ENCODE measurements at regions of chr22 and their contacts with region 1.

Region 1: DNA sequence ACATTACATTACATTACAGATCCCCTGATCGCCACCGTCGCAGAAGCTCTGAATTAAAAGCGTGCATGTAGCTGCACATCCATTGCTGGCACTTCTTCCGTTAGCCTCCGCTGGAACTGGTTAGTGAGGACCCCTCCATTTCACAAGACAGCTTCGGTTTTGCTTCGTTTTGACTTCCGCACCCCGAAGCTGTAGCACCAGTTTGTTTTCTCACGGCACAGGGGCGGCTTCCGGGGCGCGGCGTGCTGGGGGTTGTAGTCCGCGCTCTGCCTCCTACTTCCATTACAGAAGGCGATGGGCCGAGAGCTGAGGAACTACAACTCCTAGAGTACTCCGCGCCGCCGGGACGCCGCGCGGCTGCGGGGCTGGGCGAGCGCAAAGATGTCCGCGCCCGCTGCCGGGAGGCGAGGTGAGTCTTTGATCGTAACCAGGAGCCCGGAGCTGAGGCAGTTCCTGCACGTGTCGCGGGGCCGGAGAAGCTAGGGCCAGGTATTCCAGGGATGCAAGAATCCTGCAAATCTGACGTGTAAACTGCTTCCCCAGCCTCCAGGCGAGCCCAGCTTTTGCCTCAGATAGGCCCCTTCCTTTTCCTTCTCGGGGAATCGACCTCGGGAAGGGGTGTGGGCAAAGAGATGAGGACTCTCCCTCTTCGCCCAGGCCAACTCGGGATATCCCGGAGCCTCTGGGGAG is at the start of gene PEX26:
- DNase-seq: peak; percentile 93
- H3K4me3 ChIP-seq: peak within 1 kb of the TSS; percentile 98
- H3K4me3 Mint-ChIP-seq: peak within 1 kb of the TSS; percentile 99
- H3K27ac Mint-ChIP-seq: peak within 1 kb of the TSS; percentile 95
- H3K4me1 ChIP-seq: peaks cover 16% of the 10 kb centered on the region
- H3K4me1 Mint-ChIP-seq: peaks cover 24% of the 10 kb centered on the region
- H3K27me3 ChIP-seq: no peaks in the 10 kb centered on the region
- H3K27me3 Mint-ChIP-seq: no peaks in the 10 kb centered on the region
- CTCF ChIP-seq: no peak
- total RNA-seq, gene PEX26: 37.9 and 40.6 TPM in 2 replicates

Region 2: DNA sequence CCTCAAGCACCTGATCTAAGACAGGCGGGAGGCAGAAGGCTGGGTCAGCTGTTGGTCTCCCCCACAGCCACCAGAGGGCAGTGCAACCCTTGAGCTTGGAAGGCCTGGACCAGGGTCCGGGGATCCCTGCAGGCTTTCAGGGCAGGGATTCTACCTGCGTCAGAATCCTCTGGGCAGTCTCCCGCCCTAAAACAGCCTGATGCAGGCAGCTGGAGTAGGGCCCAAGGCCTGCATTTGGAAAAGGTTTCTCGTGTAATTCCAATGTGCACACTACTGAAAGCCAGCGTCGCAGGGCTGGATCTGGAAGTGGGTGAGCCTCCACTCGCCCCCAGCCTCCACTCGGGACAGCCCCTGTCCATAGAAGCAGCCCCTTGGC is 335.3 kb before region 1 on chr22:
- CTCF ChIA-PET with region 1: interaction called, 11 read pairs
- POLR2A ChIA-PET with region 1: no interaction called
- intact Hi-C with region 1: loop called (anchors 2 kb)
- DNase-seq: peak; percentile 80 to 85
- H3K4me3 ChIP-seq: no peak overlapping the region
- H3K4me3 Mint-ChIP-seq: no peak overlapping the region
- H3K27ac Mint-ChIP-seq: no peak overlapping the region
- H3K4me1 ChIP-seq: no peaks in the 10 kb centered on the region
- H3K4me1 Mint-ChIP-seq: no peaks in the 10 kb centered on the region
- H3K27me3 ChIP-seq: no peaks in the 10 kb centered on the region
- H3K27me3 Mint-ChIP-seq: no peaks in the 10 kb centered on the region
- CTCF ChIP-seq: peak; percentile 82 to 94

Region 3: GRCh38 chr22:17897858-17898257 is 179.9 kb before region 1 on chr22:
- CTCF ChIA-PET with region 1: interaction called, 9 read pairs
- POLR2A ChIA-PET with region 1: interaction called, 6 read pairs
- intact Hi-C with region 1: loop called (anchors 5 kb)
- DNase-seq: peak in 1 of 2 experiments; percentile 19
- H3K4me3 ChIP-seq: no peak overlapping the region
- H3K4me3 Mint-ChIP-seq: no peak overlapping the region
- H3K27ac Mint-ChIP-seq: peak overlapping the region; percentile 73
- H3K4me1 ChIP-seq: peaks cover 36% of the 10 kb centered on the region
- H3K4me1 Mint-ChIP-seq: peaks cover 28% of the 10 kb centered on the region
- H3K27me3 ChIP-seq: no peaks in the 10 kb centered on the region
- H3K27me3 Mint-ChIP-seq: no peaks in the 10 kb centered on the region
- CTCF ChIP-seq: no peak

Region 4: GRCh38 chr22:18001040-18001893 is 76.5 kb before region 1 on chr22:
- CTCF ChIA-PET with region 1: interaction called, 10 read pairs
- POLR2A ChIA-PET with region 1: interaction called, 5 read pairs
- intact Hi-C with region 1: loop called (anchors 2 kb)
- DNase-seq: peak; percentile 91 to 95
- H3K4me3 ChIP-seq: peak overlapping the region; percentile 69
- H3K4me3 Mint-ChIP-seq: peak overlapping the region; percentile 82
- H3K27ac Mint-ChIP-seq: peak overlapping the region; percentile 98
- H3K4me1 ChIP-seq: peaks cover 3% of the 10 kb centered on the region; the same call in 1 of the 2 replicates
- H3K4me1 Mint-ChIP-seq: peaks cover 10% of the 10 kb centered on the region
- H3K27me3 ChIP-seq: no peaks in the 10 kb centered on the region
- H3K27me3 Mint-ChIP-seq: no peaks in the 10 kb centered on the region
- CTCF ChIP-seq: peak; percentile 22 to 40

Region 5: DNA sequence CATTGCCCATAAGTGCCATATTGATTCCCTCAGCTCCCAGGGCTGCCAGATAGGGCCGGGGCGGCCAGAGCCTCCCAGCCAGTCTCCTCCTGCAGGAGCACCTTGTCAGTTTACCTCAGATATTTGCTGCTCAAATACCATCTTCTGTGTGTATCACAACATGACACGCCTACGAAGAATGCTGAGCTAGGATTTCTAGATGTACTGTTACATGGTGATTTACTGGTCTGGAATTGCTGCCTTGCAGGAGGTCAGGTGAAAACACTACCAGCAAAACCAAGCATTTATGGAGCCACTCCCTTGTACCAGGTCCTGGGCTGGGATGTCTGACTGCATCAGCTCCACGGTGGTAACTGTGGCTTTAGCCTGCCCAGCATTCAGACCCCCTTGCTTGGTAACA is 65.3 kb before region 1 on chr22:
- CTCF ChIA-PET with region 1: no interaction called
- POLR2A ChIA-PET with region 1: no interaction called
- intact Hi-C with region 1: no loop called
- DNase-seq: peak in 1 of 2 experiments; percentile 20
- H3K4me3 ChIP-seq: no peak overlapping the region
- H3K4me3 Mint-ChIP-seq: no peak overlapping the region
- H3K27ac Mint-ChIP-seq: no peak overlapping the region
- H3K4me1 ChIP-seq: no peaks in the 10 kb centered on the region
- H3K4me1 Mint-ChIP-seq: no peaks in the 10 kb centered on the region
- H3K27me3 ChIP-seq: no peaks in the 10 kb centered on the region
- H3K27me3 Mint-ChIP-seq: no peaks in the 10 kb centered on the region
- CTCF ChIP-seq: no peak

Region 6: DNA sequence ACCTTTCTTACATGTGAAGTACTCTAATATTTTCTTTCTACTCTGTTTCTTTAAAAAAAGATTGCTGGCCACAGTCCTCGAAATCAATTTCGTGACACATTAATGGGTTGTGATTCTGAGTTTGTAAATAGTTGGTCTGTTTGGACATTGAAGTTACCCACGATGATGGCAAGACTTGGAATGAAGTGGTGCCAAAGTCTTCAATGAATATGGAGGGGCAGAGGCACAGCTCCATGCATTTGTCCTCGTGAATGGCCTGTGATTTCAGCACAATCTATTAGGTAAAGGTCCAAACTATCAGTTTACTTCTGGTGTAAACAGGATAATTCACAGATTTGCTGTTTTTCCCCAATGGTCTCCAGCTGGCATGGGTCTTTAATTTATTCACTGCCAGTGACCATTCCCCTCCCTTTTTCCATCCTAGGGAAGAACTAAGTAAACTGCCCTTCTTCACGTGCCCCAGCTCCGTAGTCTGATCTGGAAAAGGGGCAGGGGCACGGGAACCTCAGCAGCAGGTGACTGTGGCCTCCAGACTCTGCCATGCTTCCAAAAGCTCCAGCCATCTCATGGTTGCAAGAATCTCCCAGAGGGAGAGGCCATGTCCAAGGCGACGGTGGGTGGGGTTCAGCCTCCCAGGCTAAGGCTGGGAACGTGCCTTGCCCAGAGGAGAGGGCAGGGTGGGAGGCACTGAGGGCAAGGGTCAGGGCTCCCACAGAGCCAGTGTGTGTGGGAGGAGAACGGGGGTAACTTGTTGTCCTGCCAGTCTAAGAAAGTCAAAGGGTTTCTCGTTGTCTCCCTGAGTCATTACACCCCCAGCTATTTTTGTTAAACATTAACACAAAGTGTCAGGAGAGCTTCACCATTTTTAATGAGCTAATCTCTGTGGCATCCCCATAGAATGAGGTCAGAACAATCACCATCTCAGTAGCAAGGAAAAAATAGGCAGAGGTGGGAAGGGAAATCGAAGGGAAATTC is 16.9 kb before region 1 on chr22:
- CTCF ChIA-PET with region 1: interaction called, 17 read pairs
- POLR2A ChIA-PET with region 1: interaction called, 7 read pairs
- intact Hi-C with region 1: no loop called
- DNase-seq: peak; percentile 75 to 77
- H3K4me3 ChIP-seq: no peak overlapping the region; the same call in 1 of the 2 replicates
- H3K4me3 Mint-ChIP-seq: peak overlapping the region; percentile 57
- H3K27ac Mint-ChIP-seq: peak overlapping the region; percentile 96
- H3K4me1 ChIP-seq: peaks cover 72% of the 10 kb centered on the region
- H3K4me1 Mint-ChIP-seq: peaks cover 32% of the 10 kb centered on the region
- H3K27me3 ChIP-seq: no peaks in the 10 kb centered on the region
- H3K27me3 Mint-ChIP-seq: no peaks in the 10 kb centered on the region
- CTCF ChIP-seq: no peak

Region 7: GRCh38 chr22:18156850-18157713 is 79.3 kb after region 1 on chr22:
- CTCF ChIA-PET with region 1: no interaction called
- POLR2A ChIA-PET with region 1: no interaction called
- intact Hi-C with region 1: no loop called
- DNase-seq: peak; percentile 77 to 82
- H3K4me3 ChIP-seq: no peak overlapping the region
- H3K4me3 Mint-ChIP-seq: no peak overlapping the region
- H3K27ac Mint-ChIP-seq: no peak overlapping the region
- H3K4me1 ChIP-seq: no peaks in the 10 kb centered on the region
- H3K4me1 Mint-ChIP-seq: no peaks in the 10 kb centered on the region
- H3K27me3 ChIP-seq: no peaks in the 10 kb centered on the region
- H3K27me3 Mint-ChIP-seq: no peaks in the 10 kb centered on the region
- CTCF ChIP-seq: peak; percentile 68 to 82

Measured in Caco-2 (cell line).